PC-9 (cell line): ENCODE measurements at regions of chr5 and their contacts with region 1.

Region 1: DNA sequence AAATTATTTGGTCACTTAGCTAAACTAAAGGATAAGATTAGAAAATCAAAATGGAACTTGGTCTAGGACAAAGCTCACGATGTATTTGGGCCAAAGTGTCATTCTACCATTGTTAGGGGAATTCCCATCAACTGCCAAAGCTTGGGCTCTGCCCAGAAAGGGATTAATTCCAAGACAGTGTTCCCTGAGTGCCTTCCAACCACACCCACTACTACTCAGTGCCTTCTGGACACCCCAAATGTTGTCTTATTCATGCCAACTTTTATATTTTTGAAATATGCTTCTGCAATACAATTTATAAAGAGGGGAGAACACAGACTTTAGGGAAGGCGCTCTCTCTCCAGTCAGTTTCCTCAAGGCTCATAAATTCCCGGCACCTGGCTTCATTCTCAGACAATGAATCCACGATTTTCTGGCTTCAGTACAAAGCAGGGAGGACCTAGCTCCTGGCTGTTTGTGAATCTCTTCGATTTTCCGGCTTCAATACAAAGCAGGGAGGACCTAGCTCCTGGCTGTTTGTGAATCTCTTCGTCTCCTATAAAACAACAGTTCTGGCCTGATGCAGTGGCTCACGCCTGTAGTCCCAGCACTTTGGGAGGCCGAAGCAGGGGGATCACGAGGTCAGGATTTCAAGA is 120.1 kb upstream of the MYO10 start:
- DNase-seq: peak; percentile 5 to 49
- H3K4me3 ChIP-seq: no peak overlapping the region
- H3K27ac ChIP-seq: no peak overlapping the region
- H3K4me1 ChIP-seq: peaks cover 34% of the 10 kb centered on the region
- H3K27me3 ChIP-seq: no peaks in the 10 kb centered on the region
- CTCF ChIP-seq: no peak

Region 2: GRCh38 chr5:16975950-16976624 is 80.1 kb before region 1 on chr5:
- CTCF ChIA-PET with region 1: interaction called, 12 read pairs
- POLR2A ChIA-PET with region 1: no interaction called
- intact Hi-C with region 1: no loop called
- DNase-seq: no peak
- H3K4me3 ChIP-seq: no peak overlapping the region
- H3K27ac ChIP-seq: no peak overlapping the region
- H3K4me1 ChIP-seq: no peaks in the 10 kb centered on the region
- H3K27me3 ChIP-seq: no peaks in the 10 kb centered on the region
- CTCF ChIP-seq: no peak

Region 3: GRCh38 chr5:17012302-17012701 is 43.9 kb before region 1 on chr5:
- CTCF ChIA-PET with region 1: interaction called, 3 read pairs
- POLR2A ChIA-PET with region 1: interaction called, 3 read pairs
- intact Hi-C with region 1: loop called (anchors 2 kb)
- DNase-seq: peak; percentile 59 to 90
- H3K4me3 ChIP-seq: no peak overlapping the region
- H3K27ac ChIP-seq: peak overlapping the region; percentile 69
- H3K4me1 ChIP-seq: peaks cover 22% of the 10 kb centered on the region
- H3K27me3 ChIP-seq: no peaks in the 10 kb centered on the region
- CTCF ChIP-seq: no peak

Region 4: DNA sequence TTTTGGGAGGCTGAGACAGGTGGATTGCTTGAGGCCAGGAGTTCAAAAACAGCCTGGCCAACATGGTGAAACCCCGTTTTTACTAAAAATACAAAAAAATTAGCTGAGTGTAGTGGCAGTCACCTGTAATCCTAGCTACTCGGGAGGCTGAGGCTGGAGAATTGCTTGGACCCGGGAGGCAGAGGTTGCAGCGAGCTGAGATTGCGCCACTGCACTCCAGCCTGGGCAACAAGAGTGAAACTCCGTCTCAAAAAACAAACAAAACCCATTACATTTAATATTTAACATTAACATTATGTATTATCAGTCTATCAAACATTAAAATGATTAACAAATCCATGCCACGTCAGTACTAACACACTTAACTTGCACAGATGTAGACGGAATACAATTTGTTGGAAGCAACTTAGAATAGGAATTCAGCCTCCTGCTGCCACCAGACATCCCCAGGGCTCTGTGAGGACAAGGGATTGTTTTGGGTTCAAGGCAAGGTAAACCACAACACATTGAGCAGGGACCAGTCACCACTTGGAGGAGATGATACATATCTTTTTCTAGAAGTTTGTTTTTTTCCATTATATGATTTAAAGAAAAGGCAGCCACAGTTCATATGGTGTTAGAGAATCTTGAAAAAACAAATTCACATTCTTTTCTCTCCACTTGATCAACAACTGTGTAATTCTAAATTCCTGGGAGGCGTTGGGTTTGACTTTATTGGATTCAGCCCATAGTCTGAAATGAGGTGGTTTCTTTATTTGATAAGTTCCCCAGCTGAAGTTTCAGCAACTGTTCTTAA is 57.2 kb after region 1 on chr5:
- CTCF ChIA-PET with region 1: no interaction called
- POLR2A ChIA-PET with region 1: no interaction called
- intact Hi-C with region 1: loop called (anchors 5 kb)
- DNase-seq: peak in 1 of 2 experiments; percentile 84
- H3K4me3 ChIP-seq: peak overlapping the region; percentile 26; the same call in 1 of the 2 replicates
- H3K27ac ChIP-seq: peak overlapping the region; percentile 69
- H3K4me1 ChIP-seq: peaks cover 38% of the 10 kb centered on the region
- H3K27me3 ChIP-seq: no peaks in the 10 kb centered on the region
- CTCF ChIP-seq: no peak